Astrocyte of the cerebellum (primary cell): ENCODE measurements at regions of chr5 and their contacts with region 1.

Region 1: DNA sequence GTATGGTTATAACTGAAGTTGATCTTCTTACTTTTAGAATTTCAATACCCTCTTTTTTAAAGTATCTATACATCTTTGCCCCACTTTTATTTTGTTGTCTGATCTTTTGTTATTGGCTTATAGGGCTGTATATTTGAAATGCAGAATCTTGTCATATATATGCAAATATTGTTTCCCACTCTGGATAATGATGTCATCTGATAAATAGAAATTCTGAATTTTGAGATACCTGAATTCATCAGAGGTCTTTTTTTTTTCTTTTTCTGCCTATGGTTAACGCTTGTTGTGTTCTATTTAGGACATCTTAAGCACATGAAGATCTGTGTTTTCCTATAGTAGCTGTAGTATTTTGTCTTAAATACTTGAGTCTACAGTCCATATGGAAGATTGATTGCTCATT is 17.8 kb downstream of the ZNF454 start:
- DNase-seq: no peak
- H3K4me3 ChIP-seq: no peak overlapping the region
- CTCF ChIP-seq: no peak

Region 2: DNA sequence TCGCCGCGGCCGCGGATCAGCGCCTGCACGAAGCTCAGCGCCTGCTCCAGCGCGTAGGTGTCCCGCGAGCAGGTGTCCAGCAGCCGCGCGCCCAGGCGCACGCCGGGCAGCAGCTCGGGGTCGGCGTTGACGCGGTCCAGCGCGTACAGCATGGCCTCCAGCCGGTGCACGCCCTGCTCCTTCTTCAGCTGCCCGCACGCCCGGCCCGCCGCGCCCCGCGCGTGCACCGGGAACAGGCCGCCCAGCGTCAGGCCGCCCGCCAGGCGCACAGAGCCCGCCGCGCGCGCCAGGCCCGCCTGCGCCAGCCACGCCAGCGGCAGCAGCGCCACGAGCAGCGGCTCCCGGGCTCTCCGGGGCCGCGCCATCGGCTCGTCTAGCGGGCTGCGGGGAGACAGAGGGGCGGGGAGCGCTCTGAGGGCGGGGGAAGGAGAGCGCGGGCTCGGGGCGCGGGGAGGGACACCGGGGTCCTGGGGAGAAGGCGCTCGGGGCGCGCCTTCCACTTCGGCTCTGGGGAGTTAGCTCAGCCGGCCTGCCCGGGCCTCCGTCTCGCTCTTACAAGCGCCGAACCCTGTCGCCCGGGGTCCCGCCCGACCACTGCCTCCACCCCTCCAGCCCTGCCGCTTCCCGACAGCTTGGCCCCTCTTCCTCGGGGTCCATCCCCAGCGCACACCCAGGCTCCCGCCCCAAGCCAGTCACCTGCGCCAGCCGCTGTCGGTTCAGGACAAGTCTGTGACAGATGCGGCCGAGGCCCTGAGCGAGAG is 36.0 kb after region 1 on chr5 and contains the start of gene GRM6:
- in situ Hi-C with region 1: loop called (anchors 5 kb)
- DNase-seq: no peak
- H3K4me3 ChIP-seq: no peak within 1 kb of the TSS
- CTCF ChIP-seq: no peak